ENCODE measurements at regions of chr15 and their contacts with region 1.

Region 1: DNA sequence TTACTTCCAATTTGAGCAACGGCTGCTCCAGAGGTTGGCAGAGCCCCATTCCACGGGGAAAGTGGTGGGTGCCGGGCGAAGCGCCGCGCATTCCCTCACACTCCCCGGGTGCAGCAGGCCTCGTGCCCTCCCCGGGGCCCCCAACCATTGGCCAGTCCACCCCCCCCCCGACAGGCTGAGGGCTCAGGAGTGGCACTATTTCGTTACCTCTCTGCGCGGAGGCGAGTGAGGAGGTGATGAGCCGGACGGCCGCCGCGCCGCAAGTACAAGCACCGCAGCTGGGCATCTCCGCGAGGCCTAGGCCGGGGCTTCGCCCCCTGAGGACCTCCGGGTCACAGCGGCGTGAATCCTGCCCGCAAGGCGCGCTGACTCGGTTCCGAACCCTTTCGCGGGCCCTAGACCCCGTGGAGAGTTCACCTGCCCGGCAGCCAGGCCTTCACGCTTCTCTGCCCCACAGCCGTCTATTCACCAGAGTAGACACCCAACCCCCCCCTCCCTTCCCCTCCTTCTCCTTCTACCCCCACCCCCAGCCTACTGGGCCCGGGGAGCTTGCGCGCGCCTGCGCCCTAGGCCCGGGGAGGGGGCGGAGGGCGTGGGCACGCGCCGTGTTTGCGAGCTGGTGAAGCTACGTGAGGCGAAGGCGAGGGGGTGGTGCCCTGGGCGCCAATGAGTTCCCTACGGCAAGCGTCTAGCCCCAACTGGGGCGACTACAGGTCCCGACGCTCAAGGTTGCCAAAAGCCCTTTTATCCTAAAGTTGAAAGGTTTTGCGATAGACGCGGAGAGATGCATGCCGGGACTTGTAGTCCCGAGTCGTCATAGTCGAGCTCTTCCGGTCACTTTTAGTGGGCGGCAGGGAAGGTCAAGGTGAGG is at the start of gene CLPX:
- DNase-seq: peak; percentile 90
- H3K4me3 ChIP-seq: peak within 1 kb of the TSS; percentile 63 to 87 (median 66)
- H3K27ac ChIP-seq: peak within 1 kb of the TSS; percentile 73
- H3K4me1 ChIP-seq: no peaks in the 10 kb centered on the region
- H3K27me3 ChIP-seq: no peaks in the 10 kb centered on the region
- CTCF ChIP-seq: peak in 1 of 2 donors; percentile 3
- total RNA-seq, gene CLPX: 28.3 to 42.4 TPM

Region 2: GRCh38 chr15:65054333-65055200 is 130.5 kb before region 1 on chr15:
- CTCF ChIA-PET with region 1: no interaction called
- dilution Hi-C with region 1: no loop called
- in situ Hi-C with region 1: no loop called
- intact Hi-C with region 1: loop called (anchors 1 kb)
- DNase-seq: peak; percentile 46
- H3K4me3 ChIP-seq: no peak overlapping the region
- H3K27ac ChIP-seq: no peak overlapping the region
- H3K4me1 ChIP-seq: peaks cover 11% of the 10 kb centered on the region
- H3K27me3 ChIP-seq: no peaks in the 10 kb centered on the region
- CTCF ChIP-seq: peak; percentile 93 to 96

Region 3: GRCh38 chr15:65146438-65146837 is 38.7 kb before region 1 on chr15:
- CTCF ChIA-PET with region 1: no interaction called
- dilution Hi-C with region 1: no loop called
- in situ Hi-C with region 1: no loop called
- intact Hi-C with region 1: loop called (anchors 1 kb)
- DNase-seq: no peak
- H3K4me3 ChIP-seq: no peak overlapping the region
- H3K27ac ChIP-seq: no peak overlapping the region
- H3K4me1 ChIP-seq: no peaks in the 10 kb centered on the region
- H3K27me3 ChIP-seq: no peaks in the 10 kb centered on the region
- CTCF ChIP-seq: no peak

Region 4: DNA sequence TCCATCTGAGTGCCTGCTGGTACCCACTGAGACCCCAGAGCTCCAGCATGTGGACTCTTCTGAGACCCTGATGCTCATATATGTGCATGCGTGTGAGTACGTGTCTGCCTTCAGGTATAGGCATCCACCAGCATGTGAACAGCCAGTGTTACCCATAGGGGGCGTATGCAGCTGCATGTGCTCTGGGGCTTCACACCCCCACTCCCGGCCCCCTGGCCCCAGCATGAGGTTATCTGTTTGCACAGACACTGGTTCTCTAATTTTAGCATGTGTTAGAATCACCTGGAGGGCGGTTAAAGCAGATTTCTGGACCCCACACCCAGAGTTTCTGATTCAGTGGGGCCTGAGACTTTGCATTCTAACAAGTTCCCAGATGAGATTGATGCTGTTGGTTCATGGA is 27.0 kb after region 1 on chr15:
- CTCF ChIA-PET with region 1: no interaction called
- dilution Hi-C with region 1: no loop called
- in situ Hi-C with region 1: no loop called
- intact Hi-C with region 1: no loop called
- DNase-seq: no peak
- H3K4me3 ChIP-seq: no peak overlapping the region
- H3K27ac ChIP-seq: no peak overlapping the region
- H3K4me1 ChIP-seq: no peaks in the 10 kb centered on the region
- H3K27me3 ChIP-seq: no peaks in the 10 kb centered on the region
- CTCF ChIP-seq: peak; percentile 39 to 48

Region 5: GRCh38 chr15:65286704-65287519 is 101.8 kb after region 1 on chr15 and contains the start of gene PARP16:
- CTCF ChIA-PET with region 1: interaction called, 3 read pairs
- dilution Hi-C with region 1: no loop called
- in situ Hi-C with region 1: no loop called
- intact Hi-C with region 1: loop called (anchors 1 kb)
- DNase-seq: peak; percentile 83
- H3K4me3 ChIP-seq: peak within 1 kb of the TSS; percentile 57 to 78 (median 59)
- H3K27ac ChIP-seq: peak within 1 kb of the TSS; percentile 28
- H3K4me1 ChIP-seq: peaks cover 16% of the 10 kb centered on the region
- H3K27me3 ChIP-seq: no peaks in the 10 kb centered on the region
- CTCF ChIP-seq: peak in 1 of 2 donors; percentile 34
- total RNA-seq, gene PARP16: 4.9 to 5.2 TPM

Region 6: GRCh38 chr15:65304389-65305144 is 119.5 kb after region 1 on chr15 and contains the start of gene RNU5B-1:
- CTCF ChIA-PET with region 1: no interaction called
- dilution Hi-C with region 1: no loop called
- in situ Hi-C with region 1: no loop called
- intact Hi-C with region 1: loop called (anchors 1 kb)
- DNase-seq: peak; percentile 70
- H3K4me3 ChIP-seq: peak within 1 kb of the TSS; percentile 40 to 90 (median 45)
- H3K27ac ChIP-seq: peak within 1 kb of the TSS; percentile 100
- H3K4me1 ChIP-seq: peaks cover 14% of the 10 kb centered on the region
- H3K27me3 ChIP-seq: no peaks in the 10 kb centered on the region
- CTCF ChIP-seq: peak; percentile 87 to 94
- total RNA-seq, gene RNU5B-1: not detected